ENCODE measurements at regions of chr10 and their contacts with region 1.

Region 1: GRCh38 chr10:60099998-60100747 is 193.8 kb upstream of the CCDC6 start:
- DNase-seq: no peak
- ATAC-seq: peak; percentile 70 to 79

Region 2: GRCh38 chr10:59741048-59741447 is 359.1 kb before region 1 on chr10:
- intact Hi-C with region 1: no loop called
- DNase-seq: no peak
- ATAC-seq: no peak

Region 3: GRCh38 chr10:60186315-60187071 is 86.3 kb after region 1 on chr10:
- intact Hi-C with region 1: loop called in 1 of 2 experiments (anchors 5 kb)
- DNase-seq: peak; percentile 63
- ATAC-seq: peak; percentile 79 to 93

Region 4: GRCh38 chr10:60208676-60209269 is 108.6 kb after region 1 on chr10:
- intact Hi-C with region 1: loop called in 1 of 2 experiments (anchors 5 kb)
- DNase-seq: no peak
- ATAC-seq: peak; percentile 35 to 41

Region 5: DNA sequence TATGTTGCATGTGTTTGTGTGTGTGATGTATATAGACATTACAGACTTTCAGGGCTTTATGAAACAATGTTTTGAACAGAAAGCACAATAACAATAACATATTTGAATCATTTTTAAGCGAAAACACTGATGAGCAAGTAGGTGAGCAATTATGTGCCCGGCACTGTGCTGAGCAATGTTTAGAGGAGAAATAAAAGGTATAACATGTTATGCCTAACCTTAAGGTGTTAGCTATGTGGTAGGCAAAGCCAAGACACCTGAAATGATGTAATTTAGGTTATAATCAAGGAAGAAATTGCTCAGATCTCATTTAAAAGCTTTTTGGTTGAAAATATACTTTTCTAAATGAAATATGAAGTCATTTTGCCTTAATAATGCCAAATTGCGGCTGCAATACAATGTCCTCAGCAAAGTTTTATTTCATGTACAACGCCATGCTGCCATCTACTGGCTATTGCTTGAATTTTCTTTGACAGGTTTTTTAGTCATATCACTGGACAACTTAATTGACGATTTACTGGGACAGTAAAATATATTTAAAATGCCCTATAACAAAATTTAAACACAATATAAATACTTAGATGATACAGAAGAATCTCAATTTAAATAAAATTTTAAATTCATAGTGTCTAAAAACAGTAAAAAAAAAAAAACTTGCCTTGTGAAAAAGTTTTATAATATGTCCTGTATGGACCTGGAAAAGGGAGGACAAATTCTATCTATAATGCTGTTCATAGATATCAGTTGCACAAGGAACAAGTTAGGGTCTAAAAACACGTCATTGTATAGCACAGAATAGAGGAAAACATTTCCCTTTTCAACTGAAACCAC is 547.0 kb after region 1 on chr10:
- intact Hi-C with region 1: loop called (anchors 5 to 10 kb)
- DNase-seq: no peak
- ATAC-seq: peak in 1 of 2 donors; percentile 49

Region 6: GRCh38 chr10:60652628-60653027 is 552.5 kb after region 1 on chr10:
- intact Hi-C with region 1: loop called (anchors 5 to 10 kb)
- DNase-seq: no peak
- ATAC-seq: no peak